ENCODE measurements at regions of chr2 and their contacts with region 1.

Region 1: GRCh38 chr2:20642055-20642971 is 8.6 kb downstream of the HS1BP3 start:
- DNase-seq: peak; percentile 80
- ATAC-seq: peak; percentile 98
- H3K4me3 Mint-ChIP-seq: no peak overlapping the region
- H3K27ac Mint-ChIP-seq: no peak overlapping the region
- H3K4me1 Mint-ChIP-seq: no peaks in the 10 kb centered on the region
- H3K27me3 Mint-ChIP-seq: no peaks in the 10 kb centered on the region

Region 2: DNA sequence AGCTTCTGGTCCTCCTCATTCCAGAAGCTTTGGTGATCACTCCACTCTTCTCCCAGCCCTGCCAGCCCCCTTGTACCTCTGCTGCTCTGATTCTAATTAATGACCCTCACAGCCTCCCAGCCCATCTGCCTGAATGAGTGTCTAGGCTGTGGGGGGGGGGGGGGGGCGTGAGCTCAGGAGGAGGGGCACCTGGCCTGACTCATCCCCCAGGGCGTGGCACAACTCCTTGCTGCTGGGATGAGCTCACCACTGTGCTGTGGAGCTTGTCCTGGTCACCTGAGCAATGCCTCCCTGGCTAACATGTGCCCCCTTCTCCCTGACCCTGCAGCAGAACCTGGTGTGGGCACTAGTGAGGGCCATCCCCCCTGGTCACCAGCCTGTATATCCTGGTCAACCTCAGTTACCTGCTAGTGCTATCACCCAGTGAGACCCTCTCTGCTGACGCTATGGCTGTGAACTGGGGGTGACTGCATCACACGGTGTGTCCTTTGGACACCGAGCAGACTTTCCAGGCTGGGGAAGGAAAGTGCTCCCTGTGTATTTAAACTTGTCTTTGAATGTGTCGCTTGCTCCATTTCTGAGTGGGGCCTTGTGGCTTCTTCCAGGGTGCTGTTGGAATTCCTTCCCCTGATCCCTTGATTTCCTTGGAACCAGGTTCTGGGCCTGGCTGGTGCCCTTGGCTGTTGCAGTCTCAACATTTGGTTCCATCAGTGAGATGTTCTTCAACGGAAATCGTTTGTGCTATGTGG is 250.2 kb before region 1 on chr2:
- CTCF ChIA-PET with region 1: no interaction called
- DNase-seq: peak; percentile 34
- ATAC-seq: no peak
- H3K4me3 Mint-ChIP-seq: no peak overlapping the region
- H3K27ac Mint-ChIP-seq: no peak overlapping the region
- H3K4me1 Mint-ChIP-seq: no peaks in the 10 kb centered on the region
- H3K27me3 Mint-ChIP-seq: peaks cover 39% of the 10 kb centered on the region

Region 3: DNA sequence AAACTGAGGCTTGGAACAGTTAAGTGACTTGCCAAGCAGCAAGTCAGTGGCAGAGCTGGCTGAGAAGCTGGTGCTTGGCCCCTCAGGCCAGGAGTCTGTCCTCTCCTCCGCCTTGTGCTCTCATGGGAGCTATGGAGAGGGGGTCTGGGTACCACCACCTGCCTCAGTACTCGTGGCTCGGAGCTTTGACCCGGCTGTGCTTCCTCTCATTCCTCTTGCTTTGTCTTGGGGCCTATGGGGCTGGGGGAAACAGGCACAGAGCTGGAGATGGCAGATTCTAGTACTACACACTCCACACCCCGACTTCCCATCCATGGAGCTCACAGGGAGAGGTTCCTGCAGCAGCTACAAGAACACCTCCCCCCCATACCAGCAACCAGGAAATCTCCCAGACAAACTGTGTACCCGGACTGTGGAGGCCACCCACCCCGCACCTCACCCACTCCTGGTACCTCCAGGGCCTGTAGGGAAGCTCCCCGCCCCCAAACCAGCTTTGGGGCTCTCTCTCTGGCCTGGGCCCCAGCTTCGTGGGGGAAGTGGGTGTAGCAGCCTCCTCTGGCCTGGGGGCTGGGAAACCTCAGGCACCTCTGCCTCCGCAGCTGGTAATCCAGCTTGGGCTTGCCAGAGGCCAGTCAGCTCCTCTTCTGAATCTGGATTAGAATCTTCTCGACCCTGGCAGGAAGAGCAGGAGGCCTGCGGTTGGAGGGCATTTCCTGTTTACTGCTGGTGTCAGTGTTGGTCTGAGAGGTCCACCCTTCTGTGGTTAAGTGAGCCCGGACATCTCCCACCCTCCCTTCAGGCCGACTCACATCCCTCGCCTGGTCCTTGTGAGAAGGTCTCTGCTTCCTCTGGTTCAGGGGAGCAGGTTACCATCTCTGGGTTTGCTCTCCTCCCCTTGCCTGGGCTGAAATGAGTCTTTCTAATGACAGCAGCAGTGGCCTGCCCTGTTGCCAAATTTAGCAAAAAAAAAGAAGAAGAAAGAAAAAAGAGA is 217.7 kb before region 1 on chr2:
- CTCF ChIA-PET with region 1: interaction called, 19 read pairs
- DNase-seq: peak; percentile 77
- ATAC-seq: peak; percentile 71
- H3K4me3 Mint-ChIP-seq: no peak overlapping the region
- H3K27ac Mint-ChIP-seq: peak overlapping the region; percentile 82
- H3K4me1 Mint-ChIP-seq: peaks cover 29% of the 10 kb centered on the region
- H3K27me3 Mint-ChIP-seq: peaks cover 6% of the 10 kb centered on the region

Region 4: DNA sequence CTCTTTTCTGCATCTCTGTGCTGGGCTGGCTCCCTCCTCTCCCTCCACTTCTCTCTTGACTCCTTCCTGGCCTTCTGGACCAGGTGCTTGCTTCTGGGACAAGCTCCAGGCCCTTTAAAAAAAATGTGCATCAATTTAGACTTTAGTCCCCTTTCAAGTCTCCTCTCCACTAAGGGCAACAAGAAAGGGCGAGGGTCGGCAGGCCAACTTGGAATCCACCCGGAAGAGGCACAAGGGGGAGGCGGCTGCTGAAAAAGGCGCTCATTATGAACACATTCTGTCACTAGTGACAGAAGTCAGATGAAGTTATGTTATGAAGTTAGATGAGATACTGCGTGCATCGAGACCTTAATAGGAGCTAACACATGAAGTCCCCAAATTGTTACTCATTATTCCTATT is 209.1 kb before region 1 on chr2:
- CTCF ChIA-PET with region 1: interaction called, 79 read pairs
- DNase-seq: peak; percentile 12
- ATAC-seq: no peak
- H3K4me3 Mint-ChIP-seq: no peak overlapping the region
- H3K27ac Mint-ChIP-seq: no peak overlapping the region
- H3K4me1 Mint-ChIP-seq: peaks cover 21% of the 10 kb centered on the region
- H3K27me3 Mint-ChIP-seq: peaks cover 47% of the 10 kb centered on the region

Region 5: GRCh38 chr2:20438334-20439192 is 203.8 kb before region 1 on chr2:
- CTCF ChIA-PET with region 1: interaction called, 79 read pairs
- DNase-seq: peak; percentile 31
- ATAC-seq: no peak
- H3K4me3 Mint-ChIP-seq: no peak overlapping the region
- H3K27ac Mint-ChIP-seq: no peak overlapping the region
- H3K4me1 Mint-ChIP-seq: peaks cover 4% of the 10 kb centered on the region
- H3K27me3 Mint-ChIP-seq: peaks cover 53% of the 10 kb centered on the region

Region 6: GRCh38 chr2:20446917-20447436 is 195.3 kb before region 1 on chr2 and contains the start of gene RHOB:
- CTCF ChIA-PET with region 1: interaction called, 79 read pairs
- DNase-seq: peak; percentile 94
- ATAC-seq: peak; percentile 97
- H3K4me3 Mint-ChIP-seq: peak within 1 kb of the TSS; percentile 73
- H3K27ac Mint-ChIP-seq: peak within 1 kb of the TSS; percentile 46
- H3K4me1 Mint-ChIP-seq: peaks cover 6% of the 10 kb centered on the region
- H3K27me3 Mint-ChIP-seq: peaks cover 50% of the 10 kb centered on the region
- total RNA-seq, gene RHOB: 9.1 to 36.4 TPM

Region 7: GRCh38 chr2:20595431-20596192 is 46.7 kb before region 1 on chr2:
- CTCF ChIA-PET with region 1: interaction called, 15 read pairs
- DNase-seq: peak; percentile 81
- ATAC-seq: peak; percentile 89
- H3K4me3 Mint-ChIP-seq: peak overlapping the region; percentile 21
- H3K27ac Mint-ChIP-seq: peak overlapping the region; percentile 86
- H3K4me1 Mint-ChIP-seq: peaks cover 31% of the 10 kb centered on the region
- H3K27me3 Mint-ChIP-seq: no peaks in the 10 kb centered on the region

Region 8: GRCh38 chr2:20600756-20601325 is 41.5 kb before region 1 on chr2:
- CTCF ChIA-PET with region 1: interaction called, 15 read pairs
- DNase-seq: no peak
- ATAC-seq: no peak
- H3K4me3 Mint-ChIP-seq: no peak overlapping the region
- H3K27ac Mint-ChIP-seq: no peak overlapping the region
- H3K4me1 Mint-ChIP-seq: peaks cover 11% of the 10 kb centered on the region
- H3K27me3 Mint-ChIP-seq: no peaks in the 10 kb centered on the region

Region 9: GRCh38 chr2:20698916-20699613 is 56.8 kb after region 1 on chr2:
- CTCF ChIA-PET with region 1: no interaction called
- DNase-seq: no peak
- ATAC-seq: no peak
- H3K4me3 Mint-ChIP-seq: no peak overlapping the region
- H3K27ac Mint-ChIP-seq: no peak overlapping the region
- H3K4me1 Mint-ChIP-seq: peaks cover 10% of the 10 kb centered on the region
- H3K27me3 Mint-ChIP-seq: no peaks in the 10 kb centered on the region